ENCODE measurements at regions of chr3 and their contacts with region 1.

Region 1: GRCh38 chr3:49802719-49803464 is at the start of gene INKA1:
- DNase-seq: peak; percentile 89 to 92 (median 91)
- H3K4me3 ChIP-seq: peak within 1 kb of the TSS; percentile 67
- H3K27ac ChIP-seq: peak within 1 kb of the TSS; percentile 50 to 92
- H3K4me1 ChIP-seq: peaks cover 11% of the 10 kb centered on the region
- H3K27me3 ChIP-seq: no peaks in the 10 kb centered on the region
- CTCF ChIP-seq: peak; percentile 87 to 95 (median 91)
- EP300 ChIP-seq: no peak
- POLR2A ChIP-seq: peak; percentile 16
- total RNA-seq, gene INKA1: 1.8 to 5.0 (median 3.4) TPM

Region 2: GRCh38 chr3:49839193-49839809 is 36.4 kb after region 1 on chr3:
- intact Hi-C with region 1: loop called (anchors 2 kb)
- DNase-seq: peak; percentile 80 to 88 (median 85)
- H3K4me3 ChIP-seq: no peak overlapping the region
- H3K27ac ChIP-seq: no peak overlapping the region
- H3K4me1 ChIP-seq: peaks cover 4% of the 10 kb centered on the region
- H3K27me3 ChIP-seq: no peaks in the 10 kb centered on the region
- CTCF ChIP-seq: peak; percentile 85 to 92 (median 91)
- EP300 ChIP-seq: no peak
- POLR2A ChIP-seq: no peak

Region 3: DNA sequence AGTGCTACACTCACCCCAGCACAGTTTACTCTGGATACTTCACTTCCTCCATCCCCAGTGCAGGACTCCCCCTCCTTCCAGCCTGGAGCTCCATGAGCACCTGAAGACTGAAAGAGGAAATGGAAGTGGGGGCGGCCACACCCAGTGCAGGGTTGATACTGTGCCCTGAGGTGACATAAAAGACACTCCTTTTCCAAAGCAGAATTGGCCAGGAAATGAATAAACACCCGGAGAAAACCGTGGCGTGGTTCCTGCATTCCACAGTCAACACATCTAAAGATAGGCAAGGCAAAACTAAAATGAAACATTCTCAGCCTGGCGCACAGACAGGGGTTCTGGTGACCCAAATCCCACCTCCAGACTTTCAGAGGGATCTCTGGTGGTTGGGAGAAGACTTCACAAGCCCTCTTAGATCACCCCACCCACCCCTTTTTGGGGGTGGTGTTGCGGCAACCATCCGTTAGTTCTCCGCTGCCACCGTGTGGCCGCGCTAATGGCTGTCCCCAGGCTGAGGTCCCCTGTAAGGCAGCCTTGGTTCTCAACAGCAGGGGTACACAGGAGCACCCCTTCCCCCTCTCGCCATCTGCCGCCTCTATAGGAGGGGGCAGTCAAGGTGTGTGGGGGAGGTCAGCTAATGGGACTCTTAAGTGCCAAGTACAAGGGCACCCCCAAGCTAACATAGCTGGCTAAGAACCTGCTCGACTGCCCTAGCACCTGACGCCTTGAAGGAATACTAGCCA is 103.3 kb after region 1 on chr3:
- intact Hi-C with region 1: loop called in 1 of 4 experiments (anchors 10 kb)
- DNase-seq: peak; percentile 44 to 68 (median 54)
- H3K4me3 ChIP-seq: no peak overlapping the region
- H3K27ac ChIP-seq: peak overlapping the region; percentile 15 to 29
- H3K4me1 ChIP-seq: peaks cover 3% of the 10 kb centered on the region
- H3K27me3 ChIP-seq: no peaks in the 10 kb centered on the region
- CTCF ChIP-seq: peak in 2 of 3 donors; percentile 62 to 71
- EP300 ChIP-seq: no peak
- POLR2A ChIP-seq: no peak